H1 (cell line): ENCODE measurements at regions of chr11 and their contacts with region 1.

Region 1: GRCh38 chr11:43021466-43021865 is 290.3 kb upstream of the API5 start:
- DNase-seq: no peak
- H3K4me3 ChIP-seq: no peak overlapping the region
- H3K27ac ChIP-seq: no peak overlapping the region
- H3K4me1 ChIP-seq: no peaks in the 10 kb centered on the region
- H3K27me3 ChIP-seq: no peaks in the 10 kb centered on the region
- CTCF ChIP-seq: peak; percentile 5 to 47 (median 41); a peak in 3 of 4 replicates
- EP300 ChIP-seq: no peak
- POLR2A ChIP-seq: no peak
- RAD21 ChIP-seq: peak; percentile 25 to 41; a peak in 2 of 4 replicates

Region 2: GRCh38 chr11:42974505-42975504 is 46.7 kb before region 1 on chr11:
- CTCF ChIA-PET with region 1: interaction called, 20 read pairs
- POLR2A ChIA-PET with region 1: no interaction called
- DNase-seq: peak in 1 of 2 experiments; percentile 23
- H3K4me3 ChIP-seq: no peak overlapping the region
- H3K27ac ChIP-seq: no peak overlapping the region
- H3K4me1 ChIP-seq: no peaks in the 10 kb centered on the region
- H3K27me3 ChIP-seq: no peaks in the 10 kb centered on the region
- CTCF ChIP-seq: peak; percentile 32 to 77 (median 65)
- EP300 ChIP-seq: no peak
- POLR2A ChIP-seq: no peak
- RAD21 ChIP-seq: peak; percentile 58 to 70

Region 3: GRCh38 chr11:43010042-43010441 is 11.4 kb before region 1 on chr11:
- CTCF ChIA-PET with region 1: interaction called, 30 read pairs
- POLR2A ChIA-PET with region 1: no interaction called
- DNase-seq: no peak
- H3K4me3 ChIP-seq: no peak overlapping the region
- H3K27ac ChIP-seq: no peak overlapping the region
- H3K4me1 ChIP-seq: no peaks in the 10 kb centered on the region
- H3K27me3 ChIP-seq: no peaks in the 10 kb centered on the region
- CTCF ChIP-seq: no peak
- EP300 ChIP-seq: no peak
- POLR2A ChIP-seq: no peak
- RAD21 ChIP-seq: no peak

Region 4: DNA sequence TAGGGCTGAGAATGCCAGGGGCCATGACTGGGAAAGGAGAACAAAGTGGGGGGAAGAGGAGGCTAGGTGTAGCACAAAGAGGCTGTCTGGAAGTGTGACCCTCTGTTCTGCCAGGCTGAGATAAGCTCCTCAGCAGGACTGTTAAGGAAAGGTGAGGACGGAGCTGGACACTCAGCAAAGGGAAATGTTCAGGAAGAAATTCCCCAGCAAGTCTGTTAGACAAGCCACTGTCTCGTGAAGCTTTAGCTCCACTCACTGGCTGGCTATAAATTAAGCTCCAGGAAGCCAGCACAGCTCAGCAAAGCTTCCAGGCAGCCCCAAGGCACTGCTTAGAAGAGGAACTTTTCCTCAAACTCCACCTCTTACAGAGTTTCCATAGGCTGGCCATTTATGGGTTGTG is 109.2 kb after region 1 on chr11:
- CTCF ChIA-PET with region 1: interaction called, 10 read pairs
- POLR2A ChIA-PET with region 1: no interaction called
- DNase-seq: no peak
- H3K4me3 ChIP-seq: no peak overlapping the region
- H3K27ac ChIP-seq: no peak overlapping the region
- H3K4me1 ChIP-seq: no peaks in the 10 kb centered on the region
- H3K27me3 ChIP-seq: no peaks in the 10 kb centered on the region
- CTCF ChIP-seq: peak in 2 of 3 experiments; percentile 42 to 45; a peak in 3 of 4 replicates
- EP300 ChIP-seq: no peak
- POLR2A ChIP-seq: no peak
- RAD21 ChIP-seq: peak; percentile 65 to 76